Astrocyte of the cerebellum (primary cell): ENCODE measurements at regions of chr10 and their contacts with region 1.

Region 1: GRCh38 chr10:12214763-12215218 is 18.8 kb downstream of the CDC123 start:
- DNase-seq: peak; percentile 48
- H3K4me3 ChIP-seq: no peak overlapping the region
- CTCF ChIP-seq: peak; percentile 55

Region 2: DNA sequence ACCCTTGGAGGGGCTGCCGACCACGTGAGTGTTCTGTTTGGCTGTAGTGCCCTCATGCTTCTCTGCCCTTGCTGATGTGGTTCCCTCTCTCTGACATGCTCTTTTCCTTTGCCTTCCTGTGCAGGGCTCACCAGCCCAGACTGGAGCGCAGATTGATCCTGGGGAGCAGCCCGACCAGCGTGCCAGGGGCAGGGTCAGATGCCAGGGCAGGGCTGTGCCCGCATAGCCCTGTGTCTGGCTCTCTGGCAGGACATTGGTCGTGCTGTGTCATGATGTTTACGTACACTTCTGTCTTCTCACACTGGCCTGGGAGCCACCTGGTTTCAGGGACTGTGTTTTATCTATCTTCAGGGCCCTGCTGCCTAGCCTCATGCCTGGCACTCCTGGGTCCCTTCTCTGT is 435.3 kb after region 1 on chr10:
- in situ Hi-C with region 1: loop called (anchors 5 kb)
- DNase-seq: no peak
- H3K4me3 ChIP-seq: no peak overlapping the region
- CTCF ChIP-seq: no peak

Region 3: DNA sequence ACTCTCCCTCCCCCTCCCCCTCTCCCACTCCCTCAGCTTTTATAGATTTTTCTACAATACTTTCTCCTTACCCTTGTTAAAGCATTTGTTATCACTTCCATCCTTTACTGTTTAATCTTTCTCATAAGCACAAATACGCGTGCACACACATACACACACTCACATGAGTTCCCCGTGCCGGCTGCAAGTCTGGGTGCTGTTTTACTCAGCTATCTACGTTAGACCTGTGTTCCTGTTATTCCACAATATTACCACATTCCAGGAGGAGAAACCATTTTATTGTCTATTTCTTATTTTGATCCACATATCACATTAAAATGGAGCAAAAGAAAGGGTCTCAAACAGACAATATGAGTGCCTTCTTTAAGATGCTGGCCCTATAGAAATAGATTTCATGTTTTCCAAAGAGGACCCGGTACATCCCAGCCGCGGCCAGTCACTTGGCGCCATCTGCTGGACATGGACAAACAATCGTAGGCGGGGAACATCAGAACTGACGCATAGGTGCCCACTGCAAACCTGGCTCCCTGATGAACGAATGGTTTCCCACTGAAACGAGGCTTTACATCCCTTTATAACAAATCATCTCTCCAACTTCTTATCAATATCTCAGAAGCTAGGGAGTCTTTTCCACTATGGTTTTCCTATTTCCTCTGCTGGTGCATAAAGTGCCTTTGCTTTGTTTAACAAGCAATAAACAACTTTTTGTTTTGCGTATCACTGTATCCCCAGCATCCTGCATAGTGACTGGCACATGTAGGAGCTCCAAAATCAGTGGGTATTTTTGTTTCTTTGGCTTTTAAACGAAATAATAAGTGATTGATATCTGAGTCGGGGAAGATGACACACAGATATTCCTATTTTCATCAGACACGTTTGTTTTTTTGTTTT is 860.0 kb after region 1 on chr10:
- in situ Hi-C with region 1: loop called (anchors 25 kb)
- DNase-seq: peak; percentile 38
- H3K4me3 ChIP-seq: no peak overlapping the region
- CTCF ChIP-seq: peak; percentile 89